Heart left ventricle (tissue), 16 donors: ENCODE measurements at regions of chr11 and their contacts with region 1.

Region 1: DNA sequence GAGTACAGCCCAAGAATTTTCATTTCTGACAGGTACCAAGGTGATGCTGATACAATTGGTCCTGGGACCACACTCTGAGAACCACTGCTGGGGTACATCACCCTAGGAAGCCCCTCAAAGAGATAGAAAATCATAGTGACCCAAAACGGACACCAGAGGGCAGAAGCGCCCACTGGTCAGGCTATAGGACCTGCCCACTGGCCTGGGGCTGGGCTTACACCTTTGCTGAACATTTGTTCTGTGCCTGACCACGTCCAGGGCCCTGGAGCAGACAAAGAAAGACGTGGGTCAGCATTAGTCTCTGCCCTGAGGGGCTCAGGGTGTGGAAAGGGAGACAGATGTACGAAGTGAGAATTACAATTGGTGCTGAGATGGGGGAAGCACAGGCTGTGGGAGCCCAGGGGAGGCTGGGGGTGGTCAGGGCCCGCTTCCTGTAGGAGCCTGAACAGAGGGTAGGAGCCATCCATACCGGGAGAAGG is 14.4 kb upstream of the SERPINH1 start:
- DNase-seq: peak; percentile 65 to 80 (median 74)
- ATAC-seq: peak; percentile 74 to 89 (median 86)
- H3K4me3 ChIP-seq: no peak overlapping the region
- H3K27ac ChIP-seq: peak overlapping the region in 2 of 12 donors; percentile 26 to 33
- H3K4me1 ChIP-seq: peaks cover 0 to 8% (median 5%) of the 10 kb centered on the region in 12 donors
- H3K27me3 ChIP-seq: no peaks in the 10 kb centered on the region
- CTCF ChIP-seq: peak; percentile 77 to 96 (median 90)
- POLR2A ChIP-seq: no peak

Region 2: GRCh38 chr11:75562048-75562835 is 14.6 kb after region 1 on chr11 and contains the start of gene SERPINH1:
- intact Hi-C with region 1: loop called in 1 of 10 experiments (anchors 1 kb)
- DNase-seq: peak; percentile 92 to 94 (median 93)
- ATAC-seq: peak; percentile 76 to 83 (median 80)
- H3K4me3 ChIP-seq: peak within 1 kb of the TSS; percentile 46 to 98 (median 86)
- H3K27ac ChIP-seq: peak within 1 kb of the TSS; percentile 93 to 100 (median 99)
- H3K4me1 ChIP-seq: peaks cover 14 to 91% (median 73%) of the 10 kb centered on the region in 12 donors
- H3K27me3 ChIP-seq: no peaks in the 10 kb centered on the region
- CTCF ChIP-seq: peak in 1 of 12 donors; percentile 4
- POLR2A ChIP-seq: peak in 1 of 2 donors; percentile 88
- total RNA-seq, gene SERPINH1: 35.7 to 211 (median 71.8) TPM

Region 3: DNA sequence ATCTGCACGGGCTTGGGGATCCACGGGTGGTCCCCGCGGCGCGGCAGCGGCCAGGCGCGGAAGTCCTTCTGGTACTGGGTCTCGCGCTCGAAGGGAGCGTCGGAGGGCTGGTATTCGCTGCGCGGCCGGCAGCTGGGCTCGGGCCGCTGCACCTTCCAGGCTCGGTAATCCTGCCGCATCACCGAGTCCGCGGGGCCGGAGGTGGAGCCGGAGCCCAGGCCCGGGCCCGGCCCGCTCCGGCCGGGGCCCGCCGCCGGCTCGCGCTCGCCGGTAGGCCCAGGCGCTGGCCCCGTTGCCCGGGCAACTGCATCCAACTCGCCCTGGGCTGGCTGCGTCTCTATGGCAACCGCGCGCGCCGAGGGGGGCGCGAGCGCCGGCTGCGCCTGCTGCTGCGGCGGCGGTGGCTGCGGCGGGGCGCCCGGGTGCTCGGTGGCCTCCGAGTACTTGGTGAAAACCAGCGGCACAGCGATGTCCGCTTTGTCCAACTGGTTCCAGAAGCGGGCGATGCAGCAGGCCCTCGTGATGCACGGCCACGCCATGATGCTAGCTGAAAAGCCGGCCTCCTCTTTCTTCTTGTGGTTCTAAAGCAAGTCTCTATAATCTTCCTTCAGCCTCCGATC is 120.3 kb after region 1 on chr11:
- intact Hi-C with region 1: loop called in 2 of 10 experiments (anchors 5 kb)
- DNase-seq: peak; percentile 53 to 77 (median 61)
- ATAC-seq: peak in 3 of 4 donors; percentile 30 to 70 (median 66)
- H3K4me3 ChIP-seq: peak overlapping the region; percentile 41 to 82 (median 65)
- H3K27ac ChIP-seq: peak overlapping the region in 9 of 12 donors; percentile 19 to 76 (median 55)
- H3K4me1 ChIP-seq: peaks cover 3 to 24% (median 12%) of the 10 kb centered on the region in 12 donors
- H3K27me3 ChIP-seq: peaks cover 0 to 65% (median 3%) of the 10 kb centered on the region in 9 donors
- CTCF ChIP-seq: no peak
- POLR2A ChIP-seq: no peak

Region 4: GRCh38 chr11:75768112-75768908 is 220.7 kb after region 1 on chr11 and contains the start of gene DGAT2:
- intact Hi-C with region 1: loop called in 3 of 10 experiments (anchors 5 to 10 kb)
- DNase-seq: peak; percentile 77 to 89 (median 83)
- ATAC-seq: peak; percentile 86 to 95 (median 90)
- H3K4me3 ChIP-seq: peak within 1 kb of the TSS; percentile 13 to 63 (median 57)
- H3K27ac ChIP-seq: peak within 1 kb of the TSS in 8 of 12 donors; percentile 15 to 73 (median 60)
- H3K4me1 ChIP-seq: peaks cover 0 to 44% (median 14%) of the 10 kb centered on the region in 12 donors
- H3K27me3 ChIP-seq: peaks cover 0 to 23% (median 7%) of the 10 kb centered on the region in 9 donors
- CTCF ChIP-seq: peak in 9 of 12 donors; percentile 19 to 47 (median 32)
- POLR2A ChIP-seq: peak in 1 of 2 donors; percentile 22
- total RNA-seq, gene DGAT2: 4.4 to 48.3 (median 8.3) TPM

Region 5: DNA sequence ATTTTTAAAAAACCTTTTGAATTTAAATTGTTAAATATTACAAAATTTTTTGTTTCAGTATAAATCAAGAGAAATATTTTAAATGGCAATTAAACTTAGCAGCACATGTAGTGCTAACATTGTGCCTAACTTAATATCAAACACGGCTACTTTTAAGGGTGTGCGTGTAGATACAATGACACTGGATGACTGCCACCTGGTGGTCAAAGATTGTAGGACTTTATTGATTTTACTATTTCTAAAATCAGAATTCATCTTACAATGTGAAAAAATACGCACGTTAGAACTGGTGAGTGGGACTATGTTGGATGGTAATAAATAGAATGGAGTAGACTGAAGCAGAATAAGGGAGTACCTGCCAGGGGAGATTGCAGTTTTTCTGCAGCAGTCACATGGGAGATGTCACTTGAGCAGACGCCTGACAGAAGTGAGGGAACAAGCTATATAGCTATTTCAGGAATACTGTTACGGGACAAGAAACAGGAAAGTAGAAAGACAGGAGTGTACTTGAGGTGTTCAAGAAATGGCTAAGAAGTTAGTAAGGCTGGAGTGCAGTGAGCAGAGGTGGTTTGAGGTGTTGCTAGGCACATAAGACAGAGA is 320.3 kb after region 1 on chr11:
- intact Hi-C with region 1: loop called in 2 of 10 experiments (anchors 5 to 10 kb)
- DNase-seq: peak in 2 of 5 donors; percentile 17 to 33
- ATAC-seq: peak; percentile 51 to 75 (median 70)
- H3K4me3 ChIP-seq: no peak overlapping the region
- H3K27ac ChIP-seq: no peak overlapping the region
- H3K4me1 ChIP-seq: peaks cover 0 to 36% (median 20%) of the 10 kb centered on the region in 12 donors
- H3K27me3 ChIP-seq: no peaks in the 10 kb centered on the region
- CTCF ChIP-seq: peak; percentile 73 to 89 (median 86)
- POLR2A ChIP-seq: no peak